ENCODE measurements at regions of chr4 and their contacts with region 1.

Region 1: GRCh38 chr4:5895287-5895686 is 2.4 kb upstream of the CRMP1 start:
- DNase-seq: no peak
- ATAC-seq: no peak
- H3K4me3 ChIP-seq: no peak overlapping the region
- H3K27ac ChIP-seq: no peak overlapping the region
- H3K4me1 ChIP-seq: no peaks in the 10 kb centered on the region
- H3K27me3 ChIP-seq: peaks cover 0 to 19% of the 10 kb centered on the region in 2 experiments; a peak in 1 of 5 replicates
- CTCF ChIP-seq: no peak
- EP300 ChIP-seq: no peak
- POLR2A ChIP-seq: no peak
- RAD21 ChIP-seq: no peak

Region 2: DNA sequence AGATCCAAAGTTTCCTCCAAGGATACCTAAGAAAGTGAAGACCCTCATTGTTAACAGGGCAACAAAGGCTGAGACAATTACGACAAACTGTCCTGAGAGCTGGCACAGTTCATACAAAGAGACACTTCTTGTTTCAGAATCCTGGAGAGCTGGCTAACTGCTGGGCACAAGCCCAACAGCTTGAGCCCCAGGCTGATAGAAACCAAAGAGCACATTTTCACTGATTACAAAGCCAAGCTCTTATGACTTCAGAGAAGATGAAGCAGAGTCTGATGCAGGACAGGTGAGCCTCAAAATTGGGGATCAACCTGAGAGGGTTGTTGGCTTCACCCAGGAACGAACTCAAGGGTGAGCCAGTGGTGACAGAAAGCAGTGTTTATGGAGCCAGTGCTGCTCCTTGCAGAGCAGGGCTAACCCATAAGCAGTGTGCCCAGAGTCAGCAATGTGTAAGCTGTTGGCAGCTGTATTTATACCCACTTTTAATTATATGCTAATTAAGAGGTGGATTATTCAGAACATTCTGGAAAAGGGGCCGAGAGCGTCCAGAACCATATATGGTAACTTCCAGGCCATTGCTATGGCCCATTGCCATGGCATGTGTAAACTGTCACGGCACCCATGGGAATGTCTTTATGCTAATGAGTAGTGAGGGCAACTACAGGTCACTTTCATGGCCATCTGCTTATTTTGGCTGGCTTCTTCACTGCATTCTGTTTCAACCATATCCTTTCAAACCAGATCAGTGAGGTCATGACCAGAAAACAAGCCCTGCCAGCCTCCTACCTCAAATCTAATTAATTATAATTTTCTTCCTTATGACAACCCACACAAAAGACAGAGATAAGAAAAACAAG is 370.6 kb before region 1 on chr4:
- CTCF ChIA-PET with region 1: no interaction called
- POLR2A ChIA-PET with region 1: no interaction called
- in situ Hi-C with region 1: no loop called
- intact Hi-C with region 1: no loop called
- DNase-seq: no peak
- ATAC-seq: no peak
- H3K4me3 ChIP-seq: no peak overlapping the region
- H3K27ac ChIP-seq: no peak overlapping the region
- H3K4me1 ChIP-seq: no peaks in the 10 kb centered on the region
- H3K27me3 ChIP-seq: no peaks in the 10 kb centered on the region
- CTCF ChIP-seq: no peak
- EP300 ChIP-seq: no peak
- POLR2A ChIP-seq: no peak
- RAD21 ChIP-seq: no peak

Region 3: DNA sequence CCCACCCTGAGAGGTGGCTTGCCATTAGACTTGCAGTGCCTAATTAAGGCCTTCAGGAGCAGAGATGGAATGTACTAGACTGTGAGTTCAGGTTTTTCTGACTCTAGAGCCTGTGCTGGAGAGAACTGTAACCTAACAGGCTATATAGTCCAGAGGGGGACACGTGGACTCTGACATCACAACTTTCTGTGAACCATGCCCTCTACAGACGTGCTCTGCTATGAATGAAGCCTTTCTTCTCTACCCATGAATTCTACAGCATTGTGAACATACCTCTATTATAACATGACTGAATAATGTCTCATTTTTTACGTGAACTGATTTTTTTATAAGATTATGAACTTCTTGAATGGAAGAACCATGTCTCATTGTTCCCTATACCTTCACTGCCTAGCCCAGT is 255.7 kb before region 1 on chr4:
- CTCF ChIA-PET with region 1: no interaction called
- POLR2A ChIA-PET with region 1: no interaction called
- in situ Hi-C with region 1: no loop called
- intact Hi-C with region 1: no loop called
- DNase-seq: no peak
- ATAC-seq: no peak
- H3K4me3 ChIP-seq: no peak overlapping the region
- H3K27ac ChIP-seq: no peak overlapping the region
- H3K4me1 ChIP-seq: peaks cover 6% of the 10 kb centered on the region; the same call in 1 of the 2 replicates
- H3K27me3 ChIP-seq: no peaks in the 10 kb centered on the region; a peak in 1 of 5 replicates
- CTCF ChIP-seq: no peak
- EP300 ChIP-seq: no peak
- POLR2A ChIP-seq: no peak
- RAD21 ChIP-seq: no peak

Region 4: DNA sequence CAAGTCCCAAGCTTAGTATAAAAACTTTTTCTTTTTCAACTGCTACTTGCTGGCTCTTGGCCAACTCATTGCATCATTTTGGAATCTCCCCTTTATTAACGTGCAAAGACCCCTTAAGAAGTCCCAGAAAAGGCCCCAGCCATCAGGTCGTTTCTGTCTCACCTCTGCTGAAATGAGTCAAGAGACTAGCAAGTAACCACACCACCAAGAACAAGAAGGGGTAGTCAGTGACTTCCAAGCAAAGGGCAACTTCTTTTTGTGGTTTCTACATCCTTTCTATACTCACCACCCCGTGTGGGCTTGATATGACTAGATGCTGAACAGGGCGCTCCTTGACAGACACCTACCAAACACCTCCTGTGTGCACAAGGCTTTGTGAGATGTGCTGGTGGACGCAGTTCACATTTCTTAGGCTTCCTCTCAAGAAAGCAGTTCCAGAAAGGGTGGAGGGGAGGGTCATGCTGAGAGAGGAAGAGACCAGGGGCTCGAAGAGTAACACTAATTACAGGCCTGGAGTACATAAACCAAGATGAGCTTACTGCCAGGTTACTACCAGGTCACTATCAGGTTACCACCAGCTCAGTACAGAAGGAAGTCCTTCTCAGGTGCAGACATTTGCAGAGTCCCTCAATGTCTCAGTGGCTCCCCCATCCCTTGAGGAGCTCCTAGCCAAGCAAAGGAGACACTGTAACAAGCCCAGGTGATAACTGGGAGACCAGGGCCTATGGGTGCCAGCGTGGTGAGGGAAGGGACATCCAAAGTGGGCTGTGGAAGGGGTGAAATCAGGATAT is 285.7 kb after region 1 on chr4:
- CTCF ChIA-PET with region 1: no interaction called
- POLR2A ChIA-PET with region 1: no interaction called
- in situ Hi-C with region 1: no loop called
- intact Hi-C with region 1: loop called (anchors 5 kb)
- DNase-seq: no peak
- ATAC-seq: no peak
- H3K4me3 ChIP-seq: no peak overlapping the region
- H3K27ac ChIP-seq: no peak overlapping the region
- H3K4me1 ChIP-seq: no peaks in the 10 kb centered on the region
- H3K27me3 ChIP-seq: peaks cover 2 to 4% of the 10 kb centered on the region in 2 experiments; a peak in 2 of 5 replicates
- CTCF ChIP-seq: no peak
- EP300 ChIP-seq: no peak
- POLR2A ChIP-seq: no peak
- RAD21 ChIP-seq: no peak